ENCODE measurements at regions of chr4 and their contacts with region 1.

Region 1: DNA sequence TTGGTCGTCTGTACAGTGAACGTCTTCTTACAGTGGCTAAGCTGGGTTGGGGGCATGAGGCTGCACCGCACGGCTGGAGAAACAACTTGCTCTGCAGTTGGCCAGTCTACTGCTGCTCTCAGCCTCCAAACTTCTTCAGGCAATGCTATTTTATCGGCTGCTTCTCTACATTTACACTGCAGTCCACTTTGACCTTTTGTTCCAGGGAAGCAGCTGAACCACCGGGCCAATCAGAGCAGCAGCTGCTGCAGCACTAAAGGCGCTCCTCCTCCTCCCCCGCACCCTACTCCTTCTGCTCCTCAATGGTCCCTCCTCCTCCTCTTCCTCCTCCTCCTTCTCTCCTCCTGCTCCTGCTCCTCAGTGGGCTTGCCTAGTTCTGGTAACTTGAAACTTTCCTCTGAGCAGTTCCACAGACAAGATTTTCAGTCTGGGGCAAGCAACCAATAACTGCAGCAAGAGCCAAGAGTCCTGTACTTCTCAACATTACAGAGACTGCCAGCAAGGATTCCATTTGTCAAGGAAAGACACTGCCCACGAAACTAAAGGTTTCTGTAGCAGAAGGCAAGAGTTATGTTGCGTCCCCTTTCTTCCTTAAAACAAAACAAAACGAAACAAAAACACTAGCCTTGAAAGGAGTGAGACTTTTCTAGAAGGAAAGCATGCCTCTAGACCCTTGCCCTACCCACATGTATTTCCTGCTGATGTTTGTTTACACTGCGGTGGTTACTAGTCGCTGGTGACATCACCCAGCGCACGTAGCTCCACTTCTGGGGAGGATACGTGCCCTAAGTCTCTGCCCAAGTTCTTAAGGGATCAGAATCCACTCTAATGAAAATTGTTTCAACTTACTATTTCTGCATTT is 125.7 kb upstream of the NAP1L5 start:
- DNase-seq: peak; percentile 86
- H3K4me3 Mint-ChIP-seq: peak overlapping the region; percentile 81
- H3K27ac Mint-ChIP-seq: peak overlapping the region; percentile 98
- H3K4me1 Mint-ChIP-seq: peaks cover 31% of the 10 kb centered on the region
- H3K27me3 Mint-ChIP-seq: no peaks in the 10 kb centered on the region
- CTCF ChIP-seq: no peak

Region 2: DNA sequence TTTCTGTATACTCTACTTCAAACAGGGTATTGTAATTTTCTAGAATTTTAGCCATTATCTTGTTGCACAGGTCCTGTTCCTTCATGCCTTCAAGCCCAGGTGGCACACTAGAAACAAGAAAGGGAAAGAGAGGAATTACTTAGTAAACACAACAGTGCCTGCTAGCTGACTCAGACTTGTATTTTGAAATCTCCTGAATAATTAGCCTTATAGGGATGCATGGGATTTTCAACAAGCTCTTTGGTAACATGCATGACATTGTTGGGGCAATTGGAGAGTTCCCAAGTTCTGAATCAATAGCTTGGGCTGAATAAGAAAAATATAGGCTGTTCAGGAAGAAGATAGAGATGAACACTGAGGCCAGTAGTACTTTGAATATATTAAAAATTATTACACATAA is 114.8 kb after region 1 on chr4:
- CTCF ChIA-PET with region 1: interaction called, 8 read pairs
- POLR2A ChIA-PET with region 1: interaction called, 7 read pairs
- intact Hi-C with region 1: loop called (anchors 1 kb)
- DNase-seq: peak; percentile 94
- H3K4me3 Mint-ChIP-seq: peak overlapping the region; percentile 5
- H3K27ac Mint-ChIP-seq: peak overlapping the region; percentile 94
- H3K4me1 Mint-ChIP-seq: peaks cover 12% of the 10 kb centered on the region
- H3K27me3 Mint-ChIP-seq: no peaks in the 10 kb centered on the region
- CTCF ChIP-seq: no peak

Region 3: DNA sequence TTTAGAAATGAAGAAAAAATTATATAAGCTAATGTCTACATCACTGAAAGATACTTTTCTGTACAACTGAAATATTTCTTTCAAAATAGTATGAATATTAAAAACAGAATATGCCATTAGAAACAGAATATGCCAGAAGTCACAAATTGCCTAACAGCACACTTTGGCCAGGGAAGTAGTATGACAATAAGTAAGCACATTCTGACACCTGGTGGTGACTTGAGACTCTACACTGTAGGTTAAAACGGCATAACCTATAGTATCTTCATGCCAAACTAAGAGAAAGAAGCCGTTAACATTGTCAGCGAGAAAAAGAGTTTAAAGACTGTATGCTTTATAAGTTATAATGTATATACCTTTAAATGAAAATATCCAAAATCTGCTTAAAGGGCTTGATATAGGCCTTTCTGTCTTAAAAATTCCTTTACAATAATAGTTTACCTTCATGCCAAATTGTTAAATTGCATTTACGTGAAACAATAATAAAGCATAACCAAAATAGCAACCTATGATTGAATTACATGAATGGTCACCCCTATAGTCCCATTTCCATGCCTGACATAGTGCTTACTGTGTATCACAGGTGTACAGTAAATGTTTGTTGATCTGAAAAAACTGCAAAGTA is 200.9 kb after region 1 on chr4:
- CTCF ChIA-PET with region 1: interaction called, 255 read pairs
- POLR2A ChIA-PET with region 1: interaction called, 30 read pairs
- intact Hi-C with region 1: loop called (anchors 1 kb)
- DNase-seq: peak; percentile 86
- H3K4me3 Mint-ChIP-seq: no peak overlapping the region
- H3K27ac Mint-ChIP-seq: peak overlapping the region; percentile 35
- H3K4me1 Mint-ChIP-seq: no peaks in the 10 kb centered on the region
- H3K27me3 Mint-ChIP-seq: no peaks in the 10 kb centered on the region
- CTCF ChIP-seq: peak; percentile 67

Region 4: GRCh38 chr4:89226665-89227574 is 403.6 kb after region 1 on chr4:
- CTCF ChIA-PET with region 1: no interaction called
- POLR2A ChIA-PET with region 1: no interaction called
- intact Hi-C with region 1: loop called (anchors 5 kb)
- DNase-seq: peak; percentile 88
- H3K4me3 Mint-ChIP-seq: no peak overlapping the region
- H3K27ac Mint-ChIP-seq: no peak overlapping the region
- H3K4me1 Mint-ChIP-seq: peaks cover 5% of the 10 kb centered on the region
- H3K27me3 Mint-ChIP-seq: no peaks in the 10 kb centered on the region
- CTCF ChIP-seq: peak; percentile 65

Region 5: DNA sequence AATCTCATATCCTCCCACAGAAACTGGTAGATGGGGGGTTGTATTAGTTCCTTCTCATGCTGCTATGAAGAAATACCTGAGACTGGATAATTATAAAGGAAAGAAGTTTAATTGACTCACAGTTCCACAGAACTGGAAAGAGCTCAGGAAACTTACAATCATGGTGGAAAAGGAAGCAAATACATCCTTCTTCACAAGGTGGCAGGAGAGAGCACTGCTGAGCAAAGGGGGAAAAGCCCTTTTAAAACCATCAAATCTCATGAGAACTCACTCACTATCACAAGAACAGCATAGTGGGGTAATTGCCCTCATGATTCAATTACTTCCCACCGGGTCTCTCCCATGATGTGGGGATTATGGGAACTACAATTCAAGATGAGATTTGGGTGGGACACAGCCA is 734.9 kb after region 1 on chr4:
- CTCF ChIA-PET with region 1: no interaction called
- POLR2A ChIA-PET with region 1: no interaction called
- intact Hi-C with region 1: no loop called
- DNase-seq: peak; percentile 31
- H3K4me3 Mint-ChIP-seq: no peak overlapping the region
- H3K27ac Mint-ChIP-seq: no peak overlapping the region
- H3K4me1 Mint-ChIP-seq: peaks cover 3% of the 10 kb centered on the region
- H3K27me3 Mint-ChIP-seq: no peaks in the 10 kb centered on the region
- CTCF ChIP-seq: peak; percentile 27